ENCODE measurements at regions of chr9 and their contacts with region 1.

Region 1: DNA sequence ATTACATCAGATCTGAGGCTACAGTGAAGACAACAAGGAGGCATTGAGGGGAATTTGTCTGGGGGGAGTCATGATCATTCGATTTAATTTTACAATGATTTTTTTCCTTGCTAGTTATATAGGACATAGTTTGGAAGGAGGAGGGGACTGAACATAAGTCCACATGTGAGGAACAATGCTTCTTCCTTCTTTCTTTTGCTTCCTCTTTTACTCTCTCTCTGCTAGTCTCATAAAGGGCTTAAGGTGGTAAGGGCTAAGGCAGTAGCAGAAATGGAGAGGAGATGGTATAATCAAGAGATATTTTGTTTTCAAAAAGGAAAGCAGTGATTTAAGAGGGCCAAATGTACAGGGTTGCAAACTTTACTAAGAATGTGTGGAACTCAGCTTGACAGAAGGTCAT is 64.3 kb downstream of the GRIN3A start:
- DNase-seq: no peak
- H3K4me3 ChIP-seq: no peak overlapping the region
- CTCF ChIP-seq: no peak

Region 2: GRCh38 chr9:101629636-101630035 is 44.5 kb before region 1 on chr9:
- in situ Hi-C with region 1: loop called (anchors 5 kb)
- DNase-seq: no peak
- H3K4me3 ChIP-seq: no peak overlapping the region
- CTCF ChIP-seq: no peak

Region 3: GRCh38 chr9:101995231-101995630 is 321.1 kb after region 1 on chr9:
- in situ Hi-C with region 1: no loop called
- DNase-seq: peak; percentile 5
- H3K4me3 ChIP-seq: no peak overlapping the region
- CTCF ChIP-seq: no peak